K562 (cell line): ENCODE measurements at regions of chr21 and their contacts with region 1.

Region 1: GRCh38 chr21:17903029-17903806 is 84.1 kb upstream of the C21orf91 start:
- DNase-seq: peak in 1 of 4 experiments; percentile 10
- ATAC-seq: peak; percentile 61
- H3K4me3 ChIP-seq: no peak overlapping the region
- H3K27ac ChIP-seq: no peak overlapping the region
- H3K4me1 ChIP-seq: no peaks in the 10 kb centered on the region; a peak in 2 of 5 replicates
- H3K27me3 ChIP-seq: no peaks in the 10 kb centered on the region
- CTCF ChIP-seq: peak in 1 of 3 experiments; percentile 36; a peak in 2 of 6 replicates
- EP300 ChIP-seq: no peak
- POLR2A ChIP-seq: no peak
- RAD21 ChIP-seq: peak; percentile 68 to 69

Region 2: DNA sequence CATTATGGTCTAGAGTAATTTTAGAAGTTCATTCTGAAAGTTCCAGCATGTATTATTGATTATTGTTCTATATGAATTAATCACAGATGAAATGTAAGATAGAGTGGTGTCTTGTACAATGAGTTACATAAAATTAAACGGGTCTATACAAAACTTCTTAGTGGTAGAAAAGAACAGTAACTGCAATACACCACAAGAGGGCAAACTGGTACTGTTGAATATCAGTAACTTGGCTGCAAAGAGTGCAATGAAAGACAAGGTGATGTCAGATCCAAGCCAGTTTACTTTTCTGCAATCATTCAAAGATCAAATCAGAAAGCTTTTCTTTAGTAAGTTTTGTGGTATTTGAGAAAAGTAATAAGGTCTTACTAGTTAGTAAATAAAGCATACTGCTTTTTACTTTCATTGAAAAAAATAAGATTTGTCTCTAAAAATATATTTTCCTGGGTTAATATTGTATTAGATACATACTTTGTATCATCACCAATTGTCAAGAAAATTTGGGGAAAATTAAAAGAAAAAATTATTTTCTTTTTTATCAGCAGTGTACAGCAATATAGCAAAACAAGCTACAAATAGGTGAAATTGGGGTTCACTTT is 224.1 kb before region 1 on chr21:
- CTCF ChIA-PET with region 1: interaction called, 17 read pairs
- POLR2A ChIA-PET with region 1: no interaction called
- in situ Hi-C with region 1: no loop called
- intact Hi-C with region 1: loop called (anchors 2 kb)
- DNase-seq: peak; percentile 54 to 68 (median 64)
- ATAC-seq: peak; percentile 93
- H3K4me3 ChIP-seq: no peak overlapping the region
- H3K27ac ChIP-seq: no peak overlapping the region
- H3K4me1 ChIP-seq: no peaks in the 10 kb centered on the region
- H3K27me3 ChIP-seq: no peaks in the 10 kb centered on the region
- CTCF ChIP-seq: peak; percentile 62 to 85 (median 65); a peak in 5 of 6 replicates
- EP300 ChIP-seq: no peak
- POLR2A ChIP-seq: no peak
- RAD21 ChIP-seq: peak; percentile 91 to 97

Region 3: GRCh38 chr21:17688912-17689874 is 214.0 kb before region 1 on chr21:
- CTCF ChIA-PET with region 1: no interaction called
- POLR2A ChIA-PET with region 1: no interaction called
- in situ Hi-C with region 1: loop called (anchors 5 kb)
- intact Hi-C with region 1: no loop called
- DNase-seq: peak; percentile 19 to 44 (median 30)
- ATAC-seq: peak; percentile 84
- H3K4me3 ChIP-seq: no peak overlapping the region
- H3K27ac ChIP-seq: peak overlapping the region; percentile 64; the same call in 2 of the 3 replicates
- H3K4me1 ChIP-seq: peaks cover 5 to 6% of the 10 kb centered on the region in 2 experiments; a peak in 4 of 5 replicates
- H3K27me3 ChIP-seq: no peaks in the 10 kb centered on the region; a peak in 1 of 5 replicates
- CTCF ChIP-seq: peak; percentile 36 to 64 (median 47); a peak in 4 of 6 replicates
- EP300 ChIP-seq: no peak
- POLR2A ChIP-seq: no peak
- RAD21 ChIP-seq: peak; percentile 37 to 58

Region 4: GRCh38 chr21:17889171-17889570 is 14.0 kb before region 1 on chr21:
- CTCF ChIA-PET with region 1: no interaction called
- POLR2A ChIA-PET with region 1: no interaction called
- in situ Hi-C with region 1: no loop called
- intact Hi-C with region 1: no loop called
- DNase-seq: no peak
- ATAC-seq: no peak
- H3K4me3 ChIP-seq: no peak overlapping the region
- H3K27ac ChIP-seq: no peak overlapping the region
- H3K4me1 ChIP-seq: no peaks in the 10 kb centered on the region
- H3K27me3 ChIP-seq: no peaks in the 10 kb centered on the region
- CTCF ChIP-seq: no peak
- EP300 ChIP-seq: no peak
- POLR2A ChIP-seq: no peak
- RAD21 ChIP-seq: no peak